Calu3 (cell line): ENCODE measurements at regions of chr18 and their contacts with region 1.

Region 1: DNA sequence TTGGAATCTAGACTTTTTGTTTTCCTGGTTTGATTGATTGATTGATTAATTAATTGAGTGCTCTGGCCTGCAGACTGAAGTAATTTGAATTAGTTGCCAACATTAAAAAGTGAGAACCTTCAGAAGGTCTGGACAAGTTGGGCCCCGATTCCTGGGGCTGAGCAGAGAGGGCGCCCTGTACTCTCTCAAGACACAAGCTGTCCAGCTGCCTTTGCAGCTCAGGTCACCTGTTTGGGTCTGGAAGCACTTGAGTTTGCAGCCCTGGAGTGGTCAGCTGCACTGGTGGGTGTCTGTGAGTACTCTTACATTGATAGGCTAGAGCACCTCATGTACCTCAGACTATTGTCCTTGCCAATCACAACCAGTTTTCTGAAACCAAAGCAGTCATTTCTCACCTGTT is 22.7 kb upstream of the CELF4 start:
- DNase-seq: no peak
- H3K4me3 Mint-ChIP-seq: no peak overlapping the region
- H3K27ac Mint-ChIP-seq: no peak overlapping the region
- H3K4me1 Mint-ChIP-seq: no peaks in the 10 kb centered on the region
- H3K27me3 Mint-ChIP-seq: peaks cover 68% of the 10 kb centered on the region
- CTCF ChIP-seq: no peak

Region 2: DNA sequence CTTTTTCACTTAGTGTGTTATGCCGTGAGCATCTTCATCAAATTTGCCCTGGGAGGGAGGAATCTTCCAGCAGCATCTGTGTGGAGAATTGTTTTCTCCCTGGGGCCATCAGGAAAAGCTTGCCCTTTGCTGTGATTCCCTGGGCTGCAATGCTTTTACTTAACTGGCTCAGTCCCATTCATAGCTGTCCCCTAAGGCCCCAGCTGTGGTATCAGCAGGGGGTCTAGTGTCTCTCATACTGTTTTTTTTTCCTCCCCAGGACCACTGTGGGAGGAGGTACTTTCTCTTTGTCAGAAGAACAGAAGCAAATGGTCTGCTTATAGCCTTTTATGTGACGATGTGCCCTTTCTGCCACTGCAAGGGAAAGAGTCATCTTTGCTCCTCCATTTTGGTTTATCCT is 154.1 kb after region 1 on chr18:
- CTCF ChIA-PET with region 1: no interaction called
- intact Hi-C with region 1: loop called (anchors 10 kb)
- DNase-seq: no peak
- H3K4me3 Mint-ChIP-seq: no peak overlapping the region
- H3K27ac Mint-ChIP-seq: no peak overlapping the region
- H3K4me1 Mint-ChIP-seq: no peaks in the 10 kb centered on the region
- H3K27me3 Mint-ChIP-seq: peaks cover 7% of the 10 kb centered on the region
- CTCF ChIP-seq: no peak